Caco-2 (cell line): ENCODE measurements at regions of chr15 and their contacts with region 1.

Region 1: DNA sequence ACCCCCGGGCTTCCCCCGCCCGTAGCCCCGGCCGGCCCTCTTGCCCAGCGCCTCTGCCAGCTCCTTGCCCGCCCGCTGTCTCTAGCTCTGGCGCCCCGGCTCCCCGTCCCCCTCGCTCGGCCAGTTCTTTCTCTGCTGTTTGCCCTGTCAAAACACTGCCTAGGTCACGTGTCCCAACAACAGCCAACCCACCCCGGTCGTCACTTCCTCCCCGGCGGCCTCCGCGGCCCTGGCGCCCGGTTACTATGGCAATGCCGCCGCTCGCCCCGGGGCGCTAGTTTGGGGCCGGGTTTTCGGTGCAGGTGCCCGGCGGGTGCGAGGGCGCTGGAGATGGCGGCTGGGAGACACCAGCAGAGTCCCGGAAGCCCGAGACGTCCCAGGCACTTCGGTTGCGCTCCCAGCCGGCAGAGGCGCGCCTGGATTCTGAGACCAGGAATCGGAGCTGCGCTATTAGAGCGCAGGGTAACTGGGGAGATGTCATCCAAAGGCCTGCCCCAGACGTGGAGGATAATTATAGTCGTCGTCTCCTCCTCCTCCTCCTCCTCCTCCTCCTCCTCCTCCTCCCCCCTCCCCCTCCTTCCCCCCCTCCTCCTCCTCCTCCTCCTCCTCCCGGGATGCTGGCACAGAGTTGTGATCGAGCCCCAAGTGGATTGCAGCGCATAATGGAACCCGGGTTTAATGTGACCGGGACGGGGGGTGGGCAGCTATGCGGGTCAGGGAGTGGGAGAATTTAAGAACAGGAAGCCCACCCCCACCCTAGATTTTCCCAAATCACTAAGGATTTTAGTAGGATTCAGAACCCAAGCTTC is at the start of gene ATOSA:
- DNase-seq: peak; percentile 88 to 94
- H3K4me3 ChIP-seq: peak within 1 kb of the TSS; percentile 92
- H3K4me3 Mint-ChIP-seq: peak within 1 kb of the TSS; percentile 92
- H3K27ac Mint-ChIP-seq: peak within 1 kb of the TSS; percentile 89
- H3K4me1 ChIP-seq: peaks cover 9% of the 10 kb centered on the region
- H3K4me1 Mint-ChIP-seq: no peaks in the 10 kb centered on the region
- H3K27me3 ChIP-seq: no peaks in the 10 kb centered on the region
- H3K27me3 Mint-ChIP-seq: peaks cover 5% of the 10 kb centered on the region
- CTCF ChIP-seq: peak in 1 of 2 experiments; percentile 18
- total RNA-seq, gene ATOSA: 17.6 and 18.4 TPM in 2 replicates

Region 2: DNA sequence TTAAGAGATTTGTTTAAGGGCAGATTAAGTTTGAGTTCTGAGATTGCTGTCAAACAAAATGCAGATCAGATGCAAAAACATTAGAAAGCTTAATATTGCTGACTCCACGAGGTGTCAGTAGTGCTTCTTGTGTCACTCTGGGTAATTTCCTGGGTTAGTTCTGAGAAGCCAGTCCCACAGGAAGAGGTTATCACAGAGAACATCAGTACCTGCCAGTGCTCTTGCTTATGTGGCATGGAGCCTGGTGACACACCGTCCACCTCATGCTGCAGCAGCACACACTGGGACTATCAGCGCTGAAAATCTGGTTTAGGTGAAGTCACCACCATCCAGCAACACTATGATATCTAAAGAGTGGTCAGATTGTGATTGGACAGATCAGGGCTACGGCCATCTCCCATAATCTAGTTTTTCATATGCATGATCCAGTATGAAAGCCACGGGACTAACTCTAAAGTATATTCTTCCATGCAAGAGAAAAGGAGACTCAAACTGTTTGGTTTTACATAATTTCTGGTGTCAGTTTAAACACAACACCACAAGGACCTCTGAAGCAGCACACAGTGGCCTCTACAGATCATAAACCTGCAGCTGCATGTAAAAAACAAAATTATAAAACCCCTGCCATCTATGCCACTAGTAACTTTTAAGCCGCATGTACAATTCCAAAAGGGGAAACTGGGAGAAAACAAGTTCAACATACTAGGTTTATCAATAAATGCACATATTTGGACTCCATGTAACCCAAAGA is 347.8 kb before region 1 on chr15:
- CTCF ChIA-PET with region 1: interaction called, 3 read pairs
- POLR2A ChIA-PET with region 1: no interaction called
- intact Hi-C with region 1: loop called (anchors 1 kb)
- DNase-seq: peak in 1 of 2 experiments; percentile 30
- H3K4me3 ChIP-seq: no peak overlapping the region
- H3K4me3 Mint-ChIP-seq: no peak overlapping the region
- H3K27ac Mint-ChIP-seq: no peak overlapping the region
- H3K4me1 ChIP-seq: peaks cover 5% of the 10 kb centered on the region; the same call in 1 of the 2 replicates
- H3K4me1 Mint-ChIP-seq: no peaks in the 10 kb centered on the region
- H3K27me3 ChIP-seq: no peaks in the 10 kb centered on the region
- H3K27me3 Mint-ChIP-seq: no peaks in the 10 kb centered on the region
- CTCF ChIP-seq: peak; percentile 45 to 53

Region 3: DNA sequence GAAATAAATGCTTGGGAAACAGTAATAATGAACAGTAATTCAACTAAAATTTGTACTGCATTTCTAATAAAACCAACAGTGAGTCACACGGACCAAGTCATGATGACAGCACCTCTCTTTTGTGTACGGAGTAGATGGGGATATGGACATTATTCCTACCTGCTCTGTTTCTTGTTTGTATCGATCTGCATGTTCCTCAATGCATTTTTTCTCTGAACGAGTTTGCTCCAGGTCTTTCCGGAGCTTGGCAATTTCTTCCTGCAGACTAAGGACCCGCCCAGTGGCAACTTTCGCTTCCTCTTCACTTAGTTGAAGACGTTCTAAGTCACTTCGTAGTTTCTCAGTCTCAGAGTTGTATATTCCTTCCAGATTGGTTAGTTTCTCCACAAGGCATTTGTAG is 309.4 kb before region 1 on chr15:
- CTCF ChIA-PET with region 1: no interaction called
- POLR2A ChIA-PET with region 1: no interaction called
- intact Hi-C with region 1: no loop called
- DNase-seq: no peak
- H3K4me3 ChIP-seq: no peak overlapping the region
- H3K4me3 Mint-ChIP-seq: no peak overlapping the region
- H3K27ac Mint-ChIP-seq: no peak overlapping the region
- H3K4me1 ChIP-seq: no peaks in the 10 kb centered on the region
- H3K4me1 Mint-ChIP-seq: peaks cover 13% of the 10 kb centered on the region
- H3K27me3 ChIP-seq: no peaks in the 10 kb centered on the region
- H3K27me3 Mint-ChIP-seq: no peaks in the 10 kb centered on the region
- CTCF ChIP-seq: no peak

Region 4: GRCh38 chr15:52528991-52529926 is 150.2 kb before region 1 on chr15:
- CTCF ChIA-PET with region 1: no interaction called
- POLR2A ChIA-PET with region 1: no interaction called
- intact Hi-C with region 1: loop called (anchors 1 kb)
- DNase-seq: peak; percentile 49 to 65
- H3K4me3 ChIP-seq: peak overlapping the region; percentile 56
- H3K4me3 Mint-ChIP-seq: peak overlapping the region; percentile 71
- H3K27ac Mint-ChIP-seq: no peak overlapping the region
- H3K4me1 ChIP-seq: peaks cover 6% of the 10 kb centered on the region; the same call in 1 of the 2 replicates
- H3K4me1 Mint-ChIP-seq: peaks cover 7% of the 10 kb centered on the region
- H3K27me3 ChIP-seq: no peaks in the 10 kb centered on the region
- H3K27me3 Mint-ChIP-seq: peaks cover 22% of the 10 kb centered on the region
- CTCF ChIP-seq: no peak

Region 5: GRCh38 chr15:52568601-52569256 is 110.7 kb before region 1 on chr15 and contains the start of gene ARPP19:
- CTCF ChIA-PET with region 1: interaction called, 3 read pairs
- POLR2A ChIA-PET with region 1: no interaction called
- intact Hi-C with region 1: loop called (anchors 1 kb)
- DNase-seq: peak; percentile 95 to 96
- H3K4me3 ChIP-seq: peak within 1 kb of the TSS; percentile 56
- H3K4me3 Mint-ChIP-seq: peak within 1 kb of the TSS; percentile 77
- H3K27ac Mint-ChIP-seq: peak within 1 kb of the TSS; percentile 85
- H3K4me1 ChIP-seq: no peaks in the 10 kb centered on the region; the same call in 1 of the 2 replicates
- H3K4me1 Mint-ChIP-seq: peaks cover 7% of the 10 kb centered on the region
- H3K27me3 ChIP-seq: no peaks in the 10 kb centered on the region
- H3K27me3 Mint-ChIP-seq: no peaks in the 10 kb centered on the region
- CTCF ChIP-seq: no peak
- total RNA-seq, gene ARPP19: 164 and 184 TPM in 2 replicates

Region 6: GRCh38 chr15:52615284-52615683 is 64.2 kb before region 1 on chr15:
- CTCF ChIA-PET with region 1: no interaction called
- POLR2A ChIA-PET with region 1: no interaction called
- intact Hi-C with region 1: loop called (anchors 1 kb)
- DNase-seq: peak in 1 of 2 experiments; percentile 43
- H3K4me3 ChIP-seq: no peak overlapping the region
- H3K4me3 Mint-ChIP-seq: peak overlapping the region; percentile 42
- H3K27ac Mint-ChIP-seq: peak overlapping the region; percentile 78
- H3K4me1 ChIP-seq: peaks cover 26% of the 10 kb centered on the region
- H3K4me1 Mint-ChIP-seq: peaks cover 16% of the 10 kb centered on the region
- H3K27me3 ChIP-seq: no peaks in the 10 kb centered on the region
- H3K27me3 Mint-ChIP-seq: no peaks in the 10 kb centered on the region
- CTCF ChIP-seq: no peak

Region 7: DNA sequence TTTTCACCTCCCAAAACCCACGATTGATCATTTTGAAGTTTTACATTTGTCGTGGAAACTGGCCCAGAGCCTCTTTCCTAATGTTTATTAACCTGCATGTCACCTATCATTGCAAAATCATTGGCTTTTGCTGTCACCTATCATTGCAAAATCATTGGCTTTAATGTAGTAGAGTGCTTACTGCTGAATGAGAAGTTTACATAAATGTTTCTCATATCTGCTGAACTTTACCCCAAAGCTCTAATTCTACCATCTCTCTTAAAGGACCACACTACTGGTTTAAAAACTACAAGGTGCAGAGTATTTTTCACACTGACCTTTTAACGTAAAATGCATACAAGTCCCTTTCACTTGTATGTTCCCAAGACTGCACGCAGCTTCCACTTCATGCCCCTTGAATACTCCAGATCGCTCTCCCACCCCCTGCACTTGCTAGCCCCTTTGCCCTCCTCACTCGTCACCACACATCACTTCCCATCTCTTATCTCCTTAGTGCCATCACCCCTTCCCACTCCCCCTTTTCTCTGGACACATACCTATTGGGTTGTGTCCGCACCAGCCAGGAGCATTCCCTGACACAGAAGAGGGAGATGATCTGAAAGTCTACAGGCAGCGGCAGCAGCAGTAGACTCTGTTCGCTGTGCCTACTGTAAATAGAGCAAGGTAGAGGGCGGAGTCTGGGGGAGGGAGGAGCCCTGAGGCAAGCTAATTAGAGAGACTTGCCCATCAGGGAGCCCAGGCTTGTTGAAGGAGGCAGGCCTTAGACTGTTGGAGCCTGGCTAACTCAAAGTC is 29.9 kb after region 1 on chr15:
- CTCF ChIA-PET with region 1: no interaction called
- POLR2A ChIA-PET with region 1: no interaction called
- intact Hi-C with region 1: loop called (anchors 1 kb)
- DNase-seq: peak; percentile 75 to 81
- H3K4me3 ChIP-seq: peak overlapping the region; percentile 32
- H3K4me3 Mint-ChIP-seq: peak overlapping the region; percentile 67
- H3K27ac Mint-ChIP-seq: no peak overlapping the region
- H3K4me1 ChIP-seq: peaks cover 11% of the 10 kb centered on the region; the same call in 1 of the 2 replicates
- H3K4me1 Mint-ChIP-seq: peaks cover 7% of the 10 kb centered on the region
- H3K27me3 ChIP-seq: no peaks in the 10 kb centered on the region
- H3K27me3 Mint-ChIP-seq: no peaks in the 10 kb centered on the region
- CTCF ChIP-seq: no peak

Region 8: GRCh38 chr15:52735231-52736089 is 56.0 kb after region 1 on chr15:
- CTCF ChIA-PET with region 1: interaction called, 3 read pairs
- POLR2A ChIA-PET with region 1: no interaction called
- intact Hi-C with region 1: loop called (anchors 1 kb)
- DNase-seq: peak; percentile 62 to 83
- H3K4me3 ChIP-seq: no peak overlapping the region
- H3K4me3 Mint-ChIP-seq: no peak overlapping the region
- H3K27ac Mint-ChIP-seq: no peak overlapping the region
- H3K4me1 ChIP-seq: no peaks in the 10 kb centered on the region
- H3K4me1 Mint-ChIP-seq: peaks cover 4% of the 10 kb centered on the region
- H3K27me3 ChIP-seq: no peaks in the 10 kb centered on the region
- H3K27me3 Mint-ChIP-seq: peaks cover 14% of the 10 kb centered on the region
- CTCF ChIP-seq: peak; percentile 47 to 84

Region 9: GRCh38 chr15:52822475-52822874 is 143.0 kb after region 1 on chr15:
- CTCF ChIA-PET with region 1: no interaction called
- POLR2A ChIA-PET with region 1: no interaction called
- intact Hi-C with region 1: no loop called
- DNase-seq: no peak
- H3K4me3 ChIP-seq: no peak overlapping the region
- H3K4me3 Mint-ChIP-seq: no peak overlapping the region
- H3K27ac Mint-ChIP-seq: no peak overlapping the region
- H3K4me1 ChIP-seq: no peaks in the 10 kb centered on the region
- H3K4me1 Mint-ChIP-seq: no peaks in the 10 kb centered on the region
- H3K27me3 ChIP-seq: no peaks in the 10 kb centered on the region
- H3K27me3 Mint-ChIP-seq: peaks cover 24% of the 10 kb centered on the region
- CTCF ChIP-seq: no peak

Region 10: DNA sequence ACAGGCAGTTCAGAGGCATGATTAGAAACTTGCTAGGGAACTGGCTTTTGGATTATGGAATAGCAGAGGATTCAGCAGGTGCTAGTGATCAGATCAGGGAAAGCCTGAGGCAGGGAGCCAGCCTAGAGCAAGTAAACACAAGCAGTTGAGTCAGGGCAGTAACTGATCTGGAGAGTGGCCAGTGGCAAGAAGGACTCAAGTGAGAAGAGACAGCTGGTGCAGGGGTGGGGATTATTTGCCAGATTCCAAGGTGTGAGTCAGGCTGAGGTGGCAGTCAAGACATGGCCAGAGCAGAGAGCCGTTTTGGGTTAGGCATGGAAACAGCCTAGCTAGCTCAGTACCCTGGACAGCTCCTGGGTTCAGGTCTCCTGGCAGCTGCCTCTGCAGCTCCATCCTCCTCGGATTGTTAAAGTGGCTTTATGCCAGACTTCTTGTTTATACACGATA is 392.6 kb after region 1 on chr15:
- CTCF ChIA-PET with region 1: no interaction called
- POLR2A ChIA-PET with region 1: no interaction called
- intact Hi-C with region 1: no loop called
- DNase-seq: peak; percentile 61 to 71
- H3K4me3 ChIP-seq: no peak overlapping the region
- H3K4me3 Mint-ChIP-seq: no peak overlapping the region
- H3K27ac Mint-ChIP-seq: no peak overlapping the region
- H3K4me1 ChIP-seq: no peaks in the 10 kb centered on the region
- H3K4me1 Mint-ChIP-seq: no peaks in the 10 kb centered on the region
- H3K27me3 ChIP-seq: no peaks in the 10 kb centered on the region; the same call in 1 of the 2 replicates
- H3K27me3 Mint-ChIP-seq: peaks cover 7% of the 10 kb centered on the region
- CTCF ChIP-seq: no peak

Region 11: GRCh38 chr15:53266176-53266575 is 586.7 kb after region 1 on chr15:
- CTCF ChIA-PET with region 1: no interaction called
- POLR2A ChIA-PET with region 1: no interaction called
- intact Hi-C with region 1: no loop called
- DNase-seq: no peak
- H3K4me3 ChIP-seq: no peak overlapping the region
- H3K4me3 Mint-ChIP-seq: no peak overlapping the region
- H3K27ac Mint-ChIP-seq: no peak overlapping the region
- H3K4me1 ChIP-seq: no peaks in the 10 kb centered on the region
- H3K4me1 Mint-ChIP-seq: no peaks in the 10 kb centered on the region
- H3K27me3 ChIP-seq: no peaks in the 10 kb centered on the region
- H3K27me3 Mint-ChIP-seq: peaks cover 2% of the 10 kb centered on the region
- CTCF ChIP-seq: no peak